ENCODE measurements at regions of chr5 and their contacts with region 1.

Region 1: GRCh38 chr5:138352071-138352721 is at the start of gene KDM3B:
- DNase-seq: peak; percentile 99
- ATAC-seq: peak; percentile 86
- H3K4me3 Mint-ChIP-seq: peak within 1 kb of the TSS; percentile 92
- H3K27ac Mint-ChIP-seq: peak within 1 kb of the TSS; percentile 91
- H3K4me1 Mint-ChIP-seq: peaks cover 51% of the 10 kb centered on the region
- H3K27me3 Mint-ChIP-seq: no peaks in the 10 kb centered on the region
- CTCF ChIP-seq: peak; percentile 99
- total RNA-seq, gene KDM3B: 85.5 and 94.0 TPM in 2 replicates

Region 2: GRCh38 chr5:137933491-137933911 is 418.7 kb before region 1 on chr5:
- CTCF ChIA-PET with region 1: no interaction called
- POLR2A ChIA-PET with region 1: no interaction called
- intact Hi-C with region 1: no loop called
- DNase-seq: no peak
- ATAC-seq: no peak
- H3K4me3 Mint-ChIP-seq: no peak overlapping the region
- H3K27ac Mint-ChIP-seq: peak overlapping the region; percentile 6
- H3K4me1 Mint-ChIP-seq: peaks cover 18% of the 10 kb centered on the region
- H3K27me3 Mint-ChIP-seq: no peaks in the 10 kb centered on the region
- CTCF ChIP-seq: no peak

Region 3: GRCh38 chr5:138035605-138036537 is 316.3 kb before region 1 on chr5:
- CTCF ChIA-PET with region 1: interaction called, 5 read pairs
- POLR2A ChIA-PET with region 1: interaction called, 4 read pairs
- intact Hi-C with region 1: loop called (anchors 2 kb)
- DNase-seq: no peak
- ATAC-seq: peak; percentile 44
- H3K4me3 Mint-ChIP-seq: peak overlapping the region; percentile 48
- H3K27ac Mint-ChIP-seq: peak overlapping the region; percentile 21
- H3K4me1 Mint-ChIP-seq: peaks cover 34% of the 10 kb centered on the region
- H3K27me3 Mint-ChIP-seq: no peaks in the 10 kb centered on the region
- CTCF ChIP-seq: peak; percentile 72

Region 4: DNA sequence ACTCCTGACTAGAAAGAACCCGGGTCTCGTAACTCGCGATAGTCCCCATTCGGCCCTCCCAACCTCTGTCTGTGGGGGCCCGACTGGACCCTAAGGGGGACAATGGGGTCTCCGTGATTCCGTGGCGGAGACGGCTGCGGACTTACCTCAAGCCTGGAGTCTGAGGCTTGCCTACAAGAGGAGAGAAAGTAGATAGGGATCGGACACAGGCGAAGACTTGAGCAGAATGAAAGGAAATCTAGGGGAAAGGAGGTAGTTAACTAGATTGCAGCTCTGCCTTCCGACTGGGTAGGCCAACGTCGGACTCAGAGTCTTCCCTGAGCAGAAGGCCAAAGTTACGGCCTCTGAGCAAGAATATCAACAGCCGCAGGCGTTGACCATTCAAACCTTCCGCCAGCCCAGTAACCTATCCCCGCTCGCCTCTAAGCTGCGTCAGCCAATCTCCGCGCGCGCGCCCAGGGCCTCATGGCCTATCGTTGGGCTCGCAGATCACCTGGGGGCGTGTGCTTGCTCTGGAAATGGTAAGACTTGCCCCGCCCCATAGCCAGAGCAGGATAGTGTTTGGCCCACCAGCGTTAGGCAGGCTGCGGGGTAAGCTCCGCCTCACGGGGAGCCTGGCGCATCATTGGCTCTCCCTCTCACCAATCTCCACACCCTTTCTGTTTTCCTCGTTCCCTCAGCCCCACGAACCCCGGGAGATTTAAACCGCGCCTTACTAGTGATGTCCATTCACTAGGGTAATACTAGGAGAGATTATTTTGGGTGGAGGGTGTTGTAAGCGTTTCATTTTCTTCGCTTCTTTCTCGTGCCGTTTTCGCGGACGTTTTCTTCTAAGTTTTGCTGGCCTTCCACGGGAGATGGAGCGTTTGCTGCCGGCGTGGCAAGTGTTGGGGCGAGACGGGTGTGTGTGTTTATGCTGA is 20.5 kb before region 1 on chr5 and contains the start of gene CDC25C:
- CTCF ChIA-PET with region 1: interaction called, 134 read pairs
- POLR2A ChIA-PET with region 1: interaction called, 322 read pairs
- intact Hi-C with region 1: loop called (anchors 1 kb)
- DNase-seq: peak; percentile 83
- ATAC-seq: peak; percentile 100
- H3K4me3 Mint-ChIP-seq: peak within 1 kb of the TSS; percentile 92
- H3K27ac Mint-ChIP-seq: peak within 1 kb of the TSS; percentile 78
- H3K4me1 Mint-ChIP-seq: peaks cover 15% of the 10 kb centered on the region
- H3K27me3 Mint-ChIP-seq: no peaks in the 10 kb centered on the region
- CTCF ChIP-seq: no peak
- total RNA-seq, gene CDC25C: 0.42 TPM in 1 of 2 replicates, not detected in the other

Region 5: DNA sequence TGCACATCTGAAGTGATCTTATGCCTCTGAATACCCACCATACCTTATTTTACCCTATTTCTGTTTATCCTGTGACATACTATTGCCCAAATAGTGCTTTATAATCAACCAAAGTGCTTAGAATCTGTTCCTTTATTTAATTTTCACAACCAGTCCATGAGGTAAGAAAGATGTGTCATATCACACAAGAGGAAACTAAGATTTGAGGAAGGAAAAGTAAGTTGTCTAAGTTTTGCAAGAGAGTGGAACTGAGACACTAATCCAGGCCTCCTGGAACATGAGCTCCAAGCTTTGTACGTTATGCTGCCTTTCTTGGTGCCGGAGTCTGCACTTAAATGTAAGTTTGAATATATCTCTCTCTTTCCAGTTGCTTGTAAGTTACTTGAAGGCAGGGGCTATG is 17.5 kb after region 1 on chr5:
- CTCF ChIA-PET with region 1: interaction called, 61 read pairs
- POLR2A ChIA-PET with region 1: interaction called, 41 read pairs
- intact Hi-C with region 1: loop called (anchors 1 kb)
- DNase-seq: no peak
- ATAC-seq: peak; percentile 52
- H3K4me3 Mint-ChIP-seq: peak overlapping the region; percentile 35
- H3K27ac Mint-ChIP-seq: peak overlapping the region; percentile 42
- H3K4me1 Mint-ChIP-seq: peaks cover 48% of the 10 kb centered on the region
- H3K27me3 Mint-ChIP-seq: no peaks in the 10 kb centered on the region
- CTCF ChIP-seq: no peak

Region 6: GRCh38 chr5:139293504-139294373 is 941.5 kb after region 1 on chr5 and contains the start of gene MATR3:
- CTCF ChIA-PET with region 1: interaction called, 3 read pairs
- POLR2A ChIA-PET with region 1: no interaction called
- intact Hi-C with region 1: loop called (anchors 10 kb)
- DNase-seq: peak; percentile 87
- ATAC-seq: peak; percentile 90
- H3K4me3 Mint-ChIP-seq: peak within 1 kb of the TSS; percentile 97
- H3K27ac Mint-ChIP-seq: peak within 1 kb of the TSS; percentile 96
- H3K4me1 Mint-ChIP-seq: peaks cover 48% of the 10 kb centered on the region
- H3K27me3 Mint-ChIP-seq: no peaks in the 10 kb centered on the region
- CTCF ChIP-seq: no peak
- total RNA-seq, gene MATR3: 242 and 294 TPM in 2 replicates